Activated CD4-positive, alpha-beta memory T cell treated with anti-CD3 and anti-CD28 coated beads, Interleukin-2, amount 10 ng/mL, durations not matched to agents 7 days and 5 days (primary cell): ENCODE measurements at regions of chr22 and their contacts with region 1.

Region 1: GRCh38 chr22:50507991-50508884 is at the start of gene NCAPH2:
- DNase-seq: peak; percentile 98
- H3K4me3 Mint-ChIP-seq: peak within 1 kb of the TSS; percentile 96
- H3K27ac Mint-ChIP-seq: peak within 1 kb of the TSS; percentile 95
- H3K4me1 Mint-ChIP-seq: peaks cover 36% of the 10 kb centered on the region
- H3K27me3 Mint-ChIP-seq: no peaks in the 10 kb centered on the region
- total RNA-seq, gene NCAPH2: 105 to 108 TPM

Region 2: GRCh38 chr22:50469377-50470305 is 38.6 kb before region 1 on chr22:
- CTCF ChIA-PET with region 1: interaction called, 11 read pairs
- POLR2A ChIA-PET with region 1: interaction called, 40 read pairs
- DNase-seq: peak; percentile 99
- H3K4me3 Mint-ChIP-seq: peak overlapping the region; percentile 68
- H3K27ac Mint-ChIP-seq: peak overlapping the region; percentile 97
- H3K4me1 Mint-ChIP-seq: peaks cover 67% of the 10 kb centered on the region
- H3K27me3 Mint-ChIP-seq: no peaks in the 10 kb centered on the region

Region 3: GRCh38 chr22:50537765-50538164 is 29.5 kb after region 1 on chr22:
- CTCF ChIA-PET with region 1: interaction called, 3 read pairs
- POLR2A ChIA-PET with region 1: interaction called, 321 read pairs
- DNase-seq: no peak
- H3K4me3 Mint-ChIP-seq: peak overlapping the region; percentile 33
- H3K27ac Mint-ChIP-seq: peak overlapping the region; percentile 99
- H3K4me1 Mint-ChIP-seq: peaks cover 83% of the 10 kb centered on the region
- H3K27me3 Mint-ChIP-seq: no peaks in the 10 kb centered on the region

Region 4: GRCh38 chr22:50544078-50544745 is 36.0 kb after region 1 on chr22:
- CTCF ChIA-PET with region 1: interaction called, 6 read pairs
- POLR2A ChIA-PET with region 1: interaction called, 37 read pairs
- DNase-seq: peak; percentile 90
- H3K4me3 Mint-ChIP-seq: peak overlapping the region; percentile 63
- H3K27ac Mint-ChIP-seq: peak overlapping the region; percentile 75
- H3K4me1 Mint-ChIP-seq: peaks cover 63% of the 10 kb centered on the region
- H3K27me3 Mint-ChIP-seq: no peaks in the 10 kb centered on the region

Region 5: GRCh38 chr22:50582562-50583293 is 74.5 kb after region 1 on chr22 and contains the start of gene CHKB:
- CTCF ChIA-PET with region 1: no interaction called
- POLR2A ChIA-PET with region 1: interaction called, 23 read pairs
- DNase-seq: peak; percentile 99
- H3K4me3 Mint-ChIP-seq: peak within 1 kb of the TSS; percentile 81
- H3K27ac Mint-ChIP-seq: peak within 1 kb of the TSS; percentile 93
- H3K4me1 Mint-ChIP-seq: peaks cover 34% of the 10 kb centered on the region
- H3K27me3 Mint-ChIP-seq: no peaks in the 10 kb centered on the region
- total RNA-seq, gene CHKB: 101 to 111 TPM